ENCODE measurements at regions of chr22 and their contacts with region 1.

Region 1: DNA sequence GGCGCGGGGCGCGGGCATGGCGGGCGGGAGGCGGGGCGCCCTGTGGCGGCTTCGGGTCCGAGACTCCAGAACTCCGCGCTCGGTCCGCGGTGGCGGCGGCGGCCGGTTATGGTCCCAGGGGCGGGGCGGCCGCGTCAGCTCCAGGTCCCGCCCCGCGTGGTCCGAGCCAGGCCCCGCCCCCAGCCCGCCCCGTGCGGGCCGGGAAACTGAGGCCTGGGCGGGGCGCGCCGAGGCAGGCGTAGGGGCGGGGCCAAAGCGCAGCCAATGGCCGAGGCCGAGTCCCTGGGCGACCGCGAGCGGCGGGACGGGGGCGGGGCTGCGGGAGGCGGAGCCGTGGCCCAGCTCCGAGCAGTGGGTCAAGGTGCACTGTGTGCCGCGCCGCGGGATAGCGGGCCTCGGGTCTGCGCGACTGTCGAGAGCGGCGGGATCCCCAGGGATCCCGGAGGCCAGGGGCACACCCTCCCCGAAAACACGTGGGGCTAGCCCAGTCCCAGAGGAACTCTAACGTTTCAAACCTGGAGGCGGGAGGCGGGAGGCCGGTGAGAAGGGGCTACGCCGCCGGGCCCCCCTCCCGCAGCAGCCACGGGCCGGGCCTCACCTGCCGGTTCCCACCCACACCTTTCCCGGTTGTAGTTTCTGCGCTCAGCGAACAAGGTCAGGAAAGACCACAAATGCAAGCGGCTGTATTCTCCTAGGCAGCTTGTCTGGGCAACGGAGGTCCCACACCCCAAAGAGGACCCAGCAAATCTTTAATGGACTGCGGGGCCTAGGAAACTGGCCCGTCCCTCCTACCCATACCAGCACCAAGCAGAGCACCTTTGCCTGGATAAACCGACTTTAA is at the start of gene SLC25A1:
- ATAC-seq: peak; percentile 65 to 87 (median 83)
- H3K4me3 ChIP-seq: peak within 1 kb of the TSS; percentile 61 to 91 (median 79)
- H3K27ac ChIP-seq: peak within 1 kb of the TSS; percentile 76 to 88
- H3K4me1 ChIP-seq: peaks cover 21 to 22% of the 10 kb centered on the region in 2 donors
- total RNA-seq, gene SLC25A1: 42.8 to 72.6 (median 62.2) TPM

Region 2: DNA sequence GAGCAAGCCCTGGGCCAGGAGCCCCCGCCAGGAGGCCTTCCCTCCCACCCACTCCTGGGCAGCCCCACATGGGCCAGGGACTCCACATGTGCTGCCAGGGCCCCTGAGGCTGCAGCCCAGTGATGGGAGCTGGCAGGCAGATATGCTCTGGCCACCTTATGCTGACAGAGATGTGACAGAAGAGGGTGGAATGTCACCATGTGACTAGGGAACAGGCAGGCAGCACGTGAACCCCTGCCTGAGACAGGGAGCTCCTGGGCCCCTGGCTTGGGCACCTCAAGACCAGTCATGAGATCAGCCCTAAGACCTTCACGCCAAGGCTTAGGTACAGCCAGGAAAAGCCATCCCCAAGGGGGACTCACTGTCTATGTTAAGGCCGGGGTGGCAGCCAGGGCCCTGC is 251.9 kb before region 1 on chr22:
- in situ Hi-C with region 1: no loop called
- ATAC-seq: no peak
- H3K4me3 ChIP-seq: no peak overlapping the region
- H3K27ac ChIP-seq: no peak overlapping the region
- H3K4me1 ChIP-seq: no peaks in the 10 kb centered on the region

Region 3: DNA sequence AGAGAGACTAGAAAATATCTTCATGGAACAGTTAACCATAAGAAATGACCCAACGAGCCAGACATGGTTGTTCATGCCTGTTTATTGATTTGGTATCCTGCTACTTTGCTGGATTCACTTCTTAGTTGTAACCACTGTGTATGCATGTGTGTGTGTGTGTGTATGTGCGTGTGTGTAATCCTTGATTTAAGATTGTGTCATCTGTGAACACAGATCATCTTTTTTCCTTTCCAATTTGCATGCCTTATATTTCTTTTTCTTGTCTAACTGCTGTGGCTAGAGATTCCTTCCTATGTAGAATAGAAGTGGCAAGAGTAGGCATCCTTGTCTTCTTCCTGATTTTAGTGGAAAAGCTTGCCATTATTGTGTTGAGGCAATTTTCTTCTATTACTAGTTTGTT is 129.0 kb after region 1 on chr22:
- in situ Hi-C with region 1: no loop called
- ATAC-seq: no peak
- H3K4me3 ChIP-seq: no peak overlapping the region
- H3K27ac ChIP-seq: no peak overlapping the region
- H3K4me1 ChIP-seq: no peaks in the 10 kb centered on the region

Region 4: DNA sequence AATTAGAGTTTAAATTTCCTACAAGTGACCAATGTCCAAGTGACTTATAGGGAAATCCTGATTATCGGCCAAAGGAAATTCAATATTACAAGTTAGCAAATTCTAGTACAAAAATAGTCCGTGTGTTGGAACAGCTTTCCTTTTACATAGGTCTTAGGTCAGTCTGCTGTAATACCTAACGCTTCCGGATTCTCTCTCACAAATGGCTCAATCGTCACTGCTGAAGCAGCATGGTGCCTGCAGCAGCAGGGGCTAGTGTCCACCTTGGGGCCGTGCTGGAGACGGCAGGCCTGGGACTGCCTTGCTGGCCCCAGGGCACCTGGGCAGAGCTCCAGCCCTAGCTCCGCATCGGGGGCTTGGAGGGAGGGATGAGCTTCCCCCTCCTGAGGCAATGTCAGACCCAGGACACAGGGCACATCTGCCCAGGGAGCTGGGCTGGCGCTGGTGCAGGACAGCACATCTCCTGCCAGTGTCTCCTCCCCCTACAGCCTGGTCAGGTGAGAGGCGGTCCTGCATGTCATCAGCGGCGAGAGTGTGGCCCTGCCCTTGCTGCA is 152.1 kb after region 1 on chr22:
- in situ Hi-C with region 1: loop called in 1 of 9 experiments (anchors 10 kb)
- ATAC-seq: no peak
- H3K4me3 ChIP-seq: no peak overlapping the region
- H3K27ac ChIP-seq: peak overlapping the region in 1 of 2 donors; percentile 23
- H3K4me1 ChIP-seq: no peaks in the 10 kb centered on the region

Region 5: DNA sequence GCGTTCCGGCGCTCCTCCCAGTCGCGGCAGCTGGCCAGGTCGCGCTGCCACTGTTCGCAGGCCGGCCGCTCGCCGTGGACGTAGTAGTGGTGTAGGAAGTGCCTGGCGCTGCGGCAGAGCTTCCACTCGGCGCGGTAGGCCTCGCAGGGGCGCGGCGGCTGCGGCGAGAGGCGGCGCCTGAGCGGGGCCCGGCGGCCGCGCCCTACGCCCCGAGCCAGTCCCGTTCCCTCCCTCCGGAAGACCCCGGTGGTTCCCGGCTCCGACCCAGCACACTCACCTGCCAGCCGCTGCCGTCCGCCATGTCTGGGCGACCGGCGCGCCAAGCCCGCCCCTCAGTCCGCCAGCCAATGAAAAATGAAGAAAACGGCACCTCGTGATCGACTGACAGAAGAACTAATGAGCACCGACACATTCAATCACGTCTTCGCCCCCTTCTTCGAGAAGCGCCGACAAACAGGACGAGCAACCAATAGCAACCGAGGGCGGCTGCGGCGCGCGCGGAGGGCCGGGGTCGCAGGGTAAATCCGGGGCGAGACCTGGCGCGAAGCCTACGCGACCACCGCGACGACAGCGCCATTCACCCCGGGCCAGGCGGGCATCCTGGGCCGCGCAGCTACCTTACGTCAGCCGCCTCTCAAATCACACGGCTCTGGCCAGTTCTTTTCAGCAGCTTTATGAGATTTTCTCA is 268.7 kb after region 1 on chr22 and contains the start of gene C22orf39:
- in situ Hi-C with region 1: loop called in 1 of 9 experiments (anchors 25 kb)
- ATAC-seq: peak; percentile 88 to 93 (median 90)
- H3K4me3 ChIP-seq: peak within 1 kb of the TSS; percentile 78 to 97 (median 95)
- H3K27ac ChIP-seq: peak within 1 kb of the TSS; percentile 84 to 95
- H3K4me1 ChIP-seq: peaks cover 22% of the 10 kb centered on the region in 2 donors
- total RNA-seq, gene C22orf39: 15.5 to 60.9 (median 47.9) TPM

Region 6: GRCh38 chr22:19629720-19630419 is 451.0 kb after region 1 on chr22:
- in situ Hi-C with region 1: loop called in 1 of 9 experiments (anchors 25 kb)
- ATAC-seq: peak; percentile 90 to 99 (median 95)
- H3K4me3 ChIP-seq: no peak overlapping the region
- H3K27ac ChIP-seq: peak overlapping the region in 1 of 2 donors; percentile 35
- H3K4me1 ChIP-seq: peaks cover 23 to 26% of the 10 kb centered on the region in 2 donors

Measured in motor neuron (in vitro differentiated cells).